ENCODE measurements at regions of chr19 and their contacts with region 1.

Region 1: GRCh38 chr19:47790398-47790814 is 11.9 kb downstream of the SELENOW start:
- DNase-seq: no peak
- H3K4me3 ChIP-seq: no peak overlapping the region
- CTCF ChIP-seq: peak; percentile 92

Region 2: GRCh38 chr19:47447470-47448359 is 342.7 kb before region 1 on chr19:
- CTCF ChIA-PET with region 1: no interaction called
- POLR2A ChIA-PET with region 1: no interaction called
- DNase-seq: no peak
- H3K4me3 ChIP-seq: peak overlapping the region; percentile 20; the same call in 1 of the 2 replicates
- CTCF ChIP-seq: no peak

Region 3: GRCh38 chr19:47707135-47707925 is 83.1 kb before region 1 on chr19:
- CTCF ChIA-PET with region 1: interaction called, 43 read pairs
- POLR2A ChIA-PET with region 1: no interaction called
- DNase-seq: no peak
- H3K4me3 ChIP-seq: no peak overlapping the region
- CTCF ChIP-seq: peak; percentile 94

Region 4: GRCh38 chr19:47719047-47719859 is 71.2 kb before region 1 on chr19:
- CTCF ChIA-PET with region 1: interaction called, 10 read pairs
- POLR2A ChIA-PET with region 1: no interaction called
- DNase-seq: peak; percentile 98
- H3K4me3 ChIP-seq: peak overlapping the region; percentile 46
- CTCF ChIP-seq: no peak

Region 5: GRCh38 chr19:47752440-47753211 is 37.8 kb before region 1 on chr19:
- CTCF ChIA-PET with region 1: no interaction called
- POLR2A ChIA-PET with region 1: no interaction called
- DNase-seq: no peak
- H3K4me3 ChIP-seq: no peak overlapping the region
- CTCF ChIP-seq: no peak

Region 6: DNA sequence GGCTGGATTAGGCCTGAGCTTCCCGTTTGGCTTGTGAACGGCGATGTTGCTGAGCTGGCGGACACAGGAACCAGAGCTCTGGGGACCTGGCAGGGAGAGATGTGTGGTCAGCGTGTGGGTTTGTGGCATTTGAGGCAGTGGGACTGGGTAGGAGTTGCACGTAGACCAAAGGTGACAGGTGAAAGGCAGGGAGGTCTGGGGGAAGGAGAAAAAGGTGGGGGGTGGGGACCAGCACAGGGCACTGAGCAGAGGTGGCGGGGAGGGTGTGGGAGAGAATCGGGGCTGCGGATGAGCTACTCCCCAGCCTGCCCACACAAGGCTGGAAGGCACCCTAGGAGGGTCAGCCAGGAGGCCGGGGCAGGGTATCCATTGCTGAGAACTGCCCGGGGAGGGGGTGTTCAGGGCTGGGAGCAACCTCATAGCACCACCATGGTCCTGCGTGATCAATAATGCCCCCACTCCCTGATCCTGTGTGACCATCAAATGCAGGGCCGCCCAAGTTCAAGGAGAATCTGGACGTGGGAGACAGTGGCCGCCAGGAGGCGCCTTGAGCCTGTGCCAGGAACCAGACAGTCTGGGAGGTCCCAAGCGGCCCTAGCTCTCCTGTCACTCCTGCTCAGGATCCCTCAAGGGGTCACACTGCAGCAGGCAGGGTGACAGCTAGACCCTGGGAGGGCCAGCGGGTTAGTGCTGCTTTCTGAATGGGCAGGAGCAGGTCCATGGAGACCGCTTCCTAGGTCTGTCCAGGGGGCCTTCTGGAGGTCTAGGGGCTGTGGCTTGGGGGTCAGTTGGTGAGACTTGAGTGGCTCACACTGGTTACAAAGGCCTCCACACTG is 24.7 kb before region 1 on chr19:
- CTCF ChIA-PET with region 1: interaction called, 100 read pairs
- POLR2A ChIA-PET with region 1: no interaction called
- DNase-seq: no peak
- H3K4me3 ChIP-seq: no peak overlapping the region
- CTCF ChIP-seq: peak; percentile 88

Region 7: GRCh38 chr19:47778089-47778953 is 12.1 kb before region 1 on chr19 and contains the start of gene SELENOW:
- CTCF ChIA-PET with region 1: interaction called, 16 read pairs
- POLR2A ChIA-PET with region 1: interaction called, 3 read pairs
- DNase-seq: no peak
- H3K4me3 ChIP-seq: peak within 1 kb of the TSS; percentile 96
- CTCF ChIP-seq: no peak

Region 8: GRCh38 chr19:47805313-47805712 is 14.9 kb after region 1 on chr19:
- CTCF ChIA-PET with region 1: interaction called, 43 read pairs
- POLR2A ChIA-PET with region 1: no interaction called
- DNase-seq: no peak
- H3K4me3 ChIP-seq: no peak overlapping the region
- CTCF ChIP-seq: no peak

Measured in AG04449 (cell line).